Aorta (tissue), 5 donors: ENCODE measurements at regions of chr19 and their contacts with region 1.

Region 1: DNA sequence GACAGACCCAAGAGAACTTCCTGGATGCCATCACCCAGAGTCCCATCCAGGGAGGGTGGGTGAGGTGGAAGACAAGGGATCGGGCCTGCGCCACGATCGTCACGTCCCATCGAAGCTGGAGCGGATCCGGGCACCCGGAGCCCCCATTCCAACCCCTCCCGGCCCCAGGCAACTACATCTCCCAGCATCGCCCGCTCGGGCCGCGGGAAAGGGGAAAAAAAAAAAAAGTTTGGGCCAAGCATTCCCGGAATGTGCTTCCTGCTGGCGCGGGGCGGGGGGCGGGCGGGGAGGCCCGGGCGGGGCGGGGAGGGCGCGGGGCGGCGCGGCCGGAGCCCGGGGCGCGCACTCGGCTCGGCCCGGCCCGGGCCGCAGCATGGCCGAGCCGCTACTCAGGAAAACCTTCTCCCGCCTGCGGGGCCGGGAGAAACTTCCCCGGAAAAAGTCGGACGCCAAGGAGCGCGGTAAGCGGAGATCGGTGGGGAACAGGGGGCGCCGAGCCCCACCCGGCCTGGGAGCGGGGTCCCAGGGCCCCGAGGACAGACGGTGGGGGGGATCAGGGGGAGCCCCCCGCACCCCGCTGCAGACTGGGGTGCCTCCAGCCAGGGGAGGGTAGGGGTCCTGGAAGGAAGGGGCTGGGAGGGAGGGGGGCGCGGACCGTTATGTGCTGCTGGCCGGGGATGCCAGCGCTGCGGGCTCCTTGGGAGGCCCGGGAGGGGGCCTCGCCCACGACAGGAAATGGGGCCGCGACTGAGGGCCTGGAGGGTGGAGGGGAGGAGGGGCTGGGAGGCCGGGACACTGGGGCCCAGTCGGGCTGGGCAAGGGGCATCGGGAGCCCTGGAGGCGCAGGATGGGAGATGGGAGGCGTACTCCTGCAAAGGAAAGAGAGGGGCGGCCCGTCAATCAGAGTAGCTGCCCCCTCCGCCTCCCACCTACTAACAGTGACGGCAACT is at the start of gene SYDE1:
- DNase-seq: peak; percentile 70 to 88
- ATAC-seq: peak; percentile 72
- H3K4me3 ChIP-seq: peak within 1 kb of the TSS; percentile 92 to 98
- H3K27ac ChIP-seq: peak within 1 kb of the TSS; percentile 73 to 96
- H3K4me1 ChIP-seq: no peaks in the 10 kb centered on the region
- H3K27me3 ChIP-seq: no peaks in the 10 kb centered on the region
- total RNA-seq, gene SYDE1: 49.9 to 53.5 TPM

Region 2: GRCh38 chr19:15125232-15126067 is 18.1 kb after region 1 on chr19:
- intact Hi-C with region 1: loop called (anchors 1 to 2 kb)
- DNase-seq: peak; percentile 99
- ATAC-seq: peak; percentile 97
- H3K4me3 ChIP-seq: peak overlapping the region; percentile 2 to 31
- H3K27ac ChIP-seq: peak overlapping the region in 1 of 2 donors; percentile 6
- H3K4me1 ChIP-seq: no peaks in the 10 kb centered on the region
- H3K27me3 ChIP-seq: no peaks in the 10 kb centered on the region